Left cardiac atrium (tissue), 4 donors: ENCODE measurements at regions of chr3 and their contacts with region 1.

Region 1: DNA sequence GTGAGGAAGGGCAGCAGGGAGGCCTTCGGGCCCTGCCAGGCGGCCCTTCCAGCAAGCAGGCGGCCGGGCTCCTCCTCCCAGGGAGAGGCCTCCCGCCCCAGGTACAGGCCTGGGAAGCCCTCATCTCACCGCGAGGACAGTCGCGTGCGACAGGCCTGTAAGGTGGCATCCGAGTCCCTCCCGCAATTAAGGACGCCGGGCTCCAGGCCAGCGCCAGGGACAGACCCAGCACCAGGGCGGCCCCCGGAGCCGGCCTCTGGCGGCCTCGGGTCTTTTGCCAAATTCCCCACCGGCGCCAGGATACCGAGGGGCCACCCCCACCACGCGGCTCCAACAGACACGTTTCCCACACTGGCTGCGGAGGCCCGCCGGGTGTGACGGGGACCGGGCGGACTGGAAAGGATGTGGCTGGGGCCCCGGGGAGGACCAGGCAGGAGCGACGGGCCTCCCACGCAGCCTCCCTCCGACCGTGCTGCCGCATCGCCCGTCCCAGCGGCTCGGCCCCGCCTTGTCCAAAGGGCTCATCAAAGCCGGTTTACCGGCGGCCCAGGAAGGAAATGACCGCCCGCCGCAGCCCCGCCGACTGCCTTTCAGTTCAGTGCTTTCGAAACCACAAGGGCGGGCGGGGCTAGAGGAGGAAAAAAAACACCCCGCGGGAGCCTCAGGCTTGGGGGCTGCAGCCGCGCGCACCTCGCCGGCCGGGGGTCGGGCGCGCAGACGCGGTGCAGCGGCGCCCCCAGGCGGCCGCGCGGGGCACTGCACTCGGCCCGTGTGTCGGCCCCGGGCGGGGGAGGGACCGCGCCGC is 11.3 kb downstream of the XXYLT1 start:
- DNase-seq: peak; percentile 94
- ATAC-seq: peak; percentile 85 to 90

Region 2: GRCh38 chr3:195119461-195120198 is 140.0 kb before region 1 on chr3:
- intact Hi-C with region 1: loop called in 1 of 2 experiments (anchors 5 kb)
- DNase-seq: no peak
- ATAC-seq: peak; percentile 20 to 37

Region 3: GRCh38 chr3:195458316-195458717 is 198.6 kb after region 1 on chr3:
- intact Hi-C with region 1: no loop called
- DNase-seq: no peak
- ATAC-seq: peak in 1 of 2 donors; percentile 71